ENCODE measurements at regions of chr2 and their contacts with region 1.

Region 1: DNA sequence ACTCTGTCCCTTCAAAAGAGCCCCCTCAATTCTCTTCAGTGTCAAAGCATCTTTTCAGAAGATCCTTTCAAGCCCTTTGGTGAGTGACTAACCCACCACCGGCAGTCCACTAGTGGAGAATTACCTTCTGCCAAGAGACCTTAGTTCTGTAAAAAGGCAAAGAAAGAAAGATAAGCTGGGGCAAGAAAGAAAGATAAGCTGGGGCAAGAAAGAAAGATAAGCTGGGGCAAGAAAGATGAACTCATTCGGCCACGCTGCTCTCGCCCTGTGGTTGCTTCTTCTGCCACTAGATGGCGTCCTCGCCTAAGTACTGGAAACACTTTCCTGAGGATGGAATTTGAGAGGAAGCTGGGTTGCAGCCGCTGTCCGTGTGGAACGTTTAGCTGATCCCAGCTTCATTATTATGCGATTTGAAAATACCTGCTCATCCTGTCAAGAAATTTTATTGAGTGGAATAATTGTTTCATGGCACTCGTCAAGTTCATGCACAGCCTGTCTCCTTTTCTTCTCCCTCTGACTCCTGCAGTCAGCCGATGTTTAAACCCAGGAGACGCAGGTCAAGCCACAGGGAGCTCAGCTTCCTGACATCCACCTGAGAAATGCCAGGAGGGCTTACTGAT is 17.3 kb upstream of the ANXA4 start:
- DNase-seq: peak; percentile 95
- H3K4me3 Mint-ChIP-seq: peak overlapping the region; percentile 61
- H3K27ac Mint-ChIP-seq: no peak overlapping the region
- H3K4me1 Mint-ChIP-seq: no peaks in the 10 kb centered on the region
- H3K27me3 Mint-ChIP-seq: no peaks in the 10 kb centered on the region

Region 2: GRCh38 chr2:69667805-69668382 is 56.8 kb before region 1 on chr2:
- CTCF ChIA-PET with region 1: no interaction called
- intact Hi-C with region 1: no loop called
- DNase-seq: no peak
- H3K4me3 Mint-ChIP-seq: no peak overlapping the region
- H3K27ac Mint-ChIP-seq: no peak overlapping the region
- H3K4me1 Mint-ChIP-seq: peaks cover 13% of the 10 kb centered on the region
- H3K27me3 Mint-ChIP-seq: no peaks in the 10 kb centered on the region

Region 3: GRCh38 chr2:69741619-69742466 is 17.2 kb after region 1 on chr2 and contains the start of gene ANXA4:
- CTCF ChIA-PET with region 1: interaction called, 19 read pairs
- intact Hi-C with region 1: no loop called
- DNase-seq: peak; percentile 78
- H3K4me3 Mint-ChIP-seq: peak within 1 kb of the TSS; percentile 75
- H3K27ac Mint-ChIP-seq: peak within 1 kb of the TSS; percentile 78
- H3K4me1 Mint-ChIP-seq: peaks cover 12% of the 10 kb centered on the region
- H3K27me3 Mint-ChIP-seq: no peaks in the 10 kb centered on the region
- total RNA-seq, gene ANXA4: 21.4 to 23.9 TPM

Region 4: DNA sequence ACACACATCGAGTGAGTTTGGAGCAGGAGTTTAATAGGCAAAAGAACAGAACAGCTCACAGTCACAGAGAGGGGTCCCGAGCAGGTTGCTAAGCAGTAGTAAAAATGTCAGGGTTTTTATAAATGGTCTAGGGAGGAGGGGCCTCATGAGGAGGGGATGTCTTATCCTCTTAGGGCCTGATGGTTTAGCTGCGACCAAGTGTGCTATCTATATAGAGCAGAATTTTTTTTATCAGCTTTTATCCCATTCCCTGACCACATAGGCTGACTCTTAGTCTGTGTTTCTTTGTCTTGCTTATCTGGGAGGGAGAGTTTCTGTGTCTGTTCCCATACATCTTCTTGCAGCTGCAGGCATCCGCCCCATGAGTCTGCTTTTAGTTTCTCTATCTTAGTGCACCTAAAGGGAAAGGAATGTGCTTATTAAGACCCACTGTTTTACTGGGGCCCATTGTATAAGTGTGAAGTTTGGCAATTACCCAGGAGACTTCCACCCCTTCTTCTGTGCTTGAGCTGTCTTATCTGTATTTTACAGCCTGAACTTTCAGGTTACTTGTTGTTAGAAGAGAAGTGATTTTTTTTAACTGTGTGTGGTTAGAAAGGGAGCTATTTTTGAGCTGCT is 74.4 kb after region 1 on chr2:
- CTCF ChIA-PET with region 1: interaction called, 23 read pairs
- intact Hi-C with region 1: no loop called
- DNase-seq: peak; percentile 25
- H3K4me3 Mint-ChIP-seq: no peak overlapping the region
- H3K27ac Mint-ChIP-seq: no peak overlapping the region
- H3K4me1 Mint-ChIP-seq: peaks cover 14% of the 10 kb centered on the region
- H3K27me3 Mint-ChIP-seq: no peaks in the 10 kb centered on the region

Region 5: GRCh38 chr2:69816923-69817542 is 92.4 kb after region 1 on chr2:
- CTCF ChIA-PET with region 1: interaction called, 234 read pairs
- intact Hi-C with region 1: loop called (anchors 1 kb)
- DNase-seq: peak; percentile 88
- H3K4me3 Mint-ChIP-seq: no peak overlapping the region
- H3K27ac Mint-ChIP-seq: no peak overlapping the region
- H3K4me1 Mint-ChIP-seq: peaks cover 2% of the 10 kb centered on the region
- H3K27me3 Mint-ChIP-seq: no peaks in the 10 kb centered on the region

Region 6: DNA sequence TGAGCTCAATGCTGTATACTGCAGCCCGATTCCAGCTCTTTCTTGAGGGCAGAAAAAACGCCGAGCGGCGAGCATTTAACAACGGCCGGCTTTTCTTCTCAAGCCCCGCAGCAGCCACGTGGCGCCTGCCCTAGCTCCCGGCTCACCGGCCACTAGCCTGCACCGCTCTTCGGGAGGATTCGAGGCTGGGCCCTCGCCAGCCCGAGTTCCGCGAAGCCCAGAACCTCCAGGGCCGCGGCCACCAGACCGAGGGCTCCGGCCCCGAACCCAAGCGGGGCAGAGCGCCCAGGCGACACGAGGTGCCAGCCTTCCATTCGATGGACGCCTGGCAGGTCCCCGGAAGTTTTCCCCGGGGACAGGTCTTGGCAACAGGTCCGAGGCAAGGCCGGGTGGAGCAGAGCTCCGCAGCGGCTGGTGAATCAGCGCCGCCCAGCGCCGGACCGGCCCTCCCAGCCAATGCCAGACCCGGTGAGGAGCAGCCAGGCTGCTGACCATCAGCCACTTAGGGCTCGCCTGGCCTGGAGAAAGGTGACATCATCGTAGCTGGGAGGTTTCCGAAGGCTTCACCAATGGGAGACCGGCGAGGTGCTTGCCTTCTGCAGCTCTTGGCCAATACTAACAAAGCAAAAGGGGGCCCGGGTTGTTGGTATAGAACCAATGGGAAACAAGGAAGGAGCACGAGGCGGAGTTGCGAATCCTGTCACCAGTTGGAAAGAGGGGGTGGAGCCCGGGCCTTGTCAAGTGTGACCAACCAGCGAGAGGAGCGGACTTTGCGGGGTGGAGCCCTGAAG is 189.7 kb after region 1 on chr2:
- CTCF ChIA-PET with region 1: interaction called, 11 read pairs
- intact Hi-C with region 1: loop called (anchors 2 kb)
- DNase-seq: peak; percentile 100
- H3K4me3 Mint-ChIP-seq: peak overlapping the region; percentile 83
- H3K27ac Mint-ChIP-seq: peak overlapping the region; percentile 87
- H3K4me1 Mint-ChIP-seq: peaks cover 36% of the 10 kb centered on the region
- H3K27me3 Mint-ChIP-seq: no peaks in the 10 kb centered on the region

Region 7: GRCh38 chr2:70190418-70191243 is 466.0 kb after region 1 on chr2 and contains the start of gene C2orf42:
- CTCF ChIA-PET with region 1: no interaction called
- intact Hi-C with region 1: loop called (anchors 1 kb)
- DNase-seq: peak; percentile 98
- H3K4me3 Mint-ChIP-seq: peak within 1 kb of the TSS; percentile 87
- H3K27ac Mint-ChIP-seq: peak within 1 kb of the TSS; percentile 98
- H3K4me1 Mint-ChIP-seq: peaks cover 21% of the 10 kb centered on the region
- H3K27me3 Mint-ChIP-seq: no peaks in the 10 kb centered on the region
- total RNA-seq, gene C2orf42: 19.2 to 23.3 TPM

Region 8: GRCh38 chr2:71000780-71001591 is 1276.3 kb after region 1 on chr2:
- CTCF ChIA-PET with region 1: no interaction called
- intact Hi-C with region 1: no loop called
- DNase-seq: peak; percentile 91
- H3K4me3 Mint-ChIP-seq: peak overlapping the region; percentile 73
- H3K27ac Mint-ChIP-seq: peak overlapping the region; percentile 63
- H3K4me1 Mint-ChIP-seq: peaks cover 16% of the 10 kb centered on the region
- H3K27me3 Mint-ChIP-seq: no peaks in the 10 kb centered on the region